BJ (cell line): ENCODE measurements at regions of chr19 and their contacts with region 1.

Region 1: GRCh38 chr19:36032251-36033104 is at the start of gene CLIP3:
- DNase-seq: no peak
- H3K4me3 ChIP-seq: peak within 1 kb of the TSS; percentile 99
- H3K27me3 ChIP-seq: no peaks in the 10 kb centered on the region
- CTCF ChIP-seq: 0 out of 2 replicates have a peak, but pooled peaks have one; percentile 10
- polyA plus RNA-seq, gene CLIP3: 14.7 and 23.9 TPM in 2 replicates

Region 2: GRCh38 chr19:36073121-36073872 is 40.8 kb after region 1 on chr19:
- CTCF ChIA-PET with region 1: no interaction called
- POLR2A ChIA-PET with region 1: no interaction called
- DNase-seq: no peak
- H3K4me3 ChIP-seq: no peak overlapping the region
- H3K27me3 ChIP-seq: no peaks in the 10 kb centered on the region
- CTCF ChIP-seq: no peak

Region 3: GRCh38 chr19:36898422-36898821 is 865.9 kb after region 1 on chr19:
- CTCF ChIA-PET with region 1: no interaction called
- POLR2A ChIA-PET with region 1: interaction called, 27 read pairs
- DNase-seq: no peak
- H3K4me3 ChIP-seq: no peak overlapping the region
- H3K27me3 ChIP-seq: no peaks in the 10 kb centered on the region
- CTCF ChIP-seq: no peak